IMR-90 (cell line): ENCODE measurements at regions of chr5 and their contacts with region 1.

Region 1: DNA sequence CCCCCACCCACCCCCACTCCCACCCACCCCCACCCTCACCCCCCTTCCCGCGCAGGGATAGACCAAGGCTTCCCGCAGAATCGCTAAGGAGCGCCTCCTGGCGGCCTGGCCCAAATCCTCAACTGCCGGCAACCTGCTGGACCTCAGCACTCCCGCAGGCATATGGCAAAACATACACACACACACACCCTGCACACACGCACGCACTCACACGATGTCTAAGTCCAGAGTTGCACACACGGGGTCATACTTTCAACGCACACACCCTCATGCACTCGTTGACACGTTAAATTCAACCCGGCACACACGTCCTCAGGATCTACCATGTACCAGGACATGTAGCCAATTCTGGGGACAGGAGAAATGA is 1.7 kb downstream of the CPLX2 start:
- DNase-seq: no peak
- ATAC-seq: no peak
- H3K4me3 ChIP-seq: no peak overlapping the region
- H3K27ac ChIP-seq: no peak overlapping the region
- H3K4me1 ChIP-seq: peaks cover 2% of the 10 kb centered on the region; the same call in 1 of the 2 replicates
- H3K27me3 ChIP-seq: peaks cover 19% of the 10 kb centered on the region; the same call in 1 of the 2 replicates
- CTCF ChIP-seq: 0 out of 2 replicates have a peak, but pooled peaks have one; percentile 4
- POLR2A ChIP-seq: no peak
- RAD21 ChIP-seq: no peak

Region 2: DNA sequence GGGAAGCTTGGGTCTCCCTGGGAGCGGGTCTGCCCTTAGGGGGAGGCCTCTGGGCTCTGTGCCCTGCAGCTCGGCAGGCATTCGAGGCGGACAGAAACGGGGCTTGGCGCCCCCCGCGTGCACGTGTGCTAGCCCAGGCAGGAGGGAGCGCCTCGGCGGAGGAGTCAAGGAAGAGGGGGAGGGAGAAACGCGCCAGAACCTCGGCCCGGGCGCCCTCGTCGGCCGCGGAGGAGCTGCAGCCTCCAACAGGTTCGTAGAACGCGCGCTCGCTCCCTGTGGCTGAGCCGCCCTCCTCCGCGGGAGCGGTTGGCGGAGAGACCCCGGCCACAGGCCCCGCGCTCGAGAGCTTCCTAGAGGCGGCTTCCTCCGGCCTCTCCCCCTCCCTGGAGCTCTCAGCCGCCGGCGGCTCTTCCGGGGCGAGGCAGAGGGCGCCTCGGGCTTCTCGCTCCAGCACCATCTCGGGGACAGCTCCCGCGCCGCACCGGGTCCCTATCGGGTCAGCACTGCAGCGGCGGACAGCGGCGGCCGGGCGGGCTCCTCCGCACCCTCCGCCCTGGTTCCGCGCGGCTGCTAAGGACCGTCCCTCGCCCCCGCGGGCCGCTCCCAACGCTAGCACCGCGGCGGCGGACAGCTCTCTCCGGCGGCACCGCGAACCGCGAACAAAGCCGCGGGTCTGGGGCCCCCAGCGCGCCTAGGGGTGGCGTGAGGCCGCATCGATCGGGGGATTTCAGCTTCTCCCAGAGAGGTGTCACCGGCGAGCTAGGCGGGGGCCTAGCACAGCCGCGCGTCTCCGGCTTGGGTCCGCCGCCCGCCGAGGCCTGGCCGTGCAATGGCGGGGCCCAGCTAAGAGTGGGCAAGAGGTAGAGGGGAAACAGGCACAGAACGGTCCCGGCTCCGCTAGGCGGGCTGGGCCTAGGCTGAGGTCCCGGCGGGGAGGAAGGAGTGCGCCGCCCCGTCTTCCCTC is 76.3 kb before region 1 on chr5:
- CTCF ChIA-PET with region 1: no interaction called
- POLR2A ChIA-PET with region 1: no interaction called
- dilution Hi-C with region 1: no loop called
- in situ Hi-C with region 1: no loop called
- intact Hi-C with region 1: loop called (anchors 1 kb)
- DNase-seq: peak; percentile 74
- ATAC-seq: peak; percentile 100
- H3K4me3 ChIP-seq: no peak overlapping the region
- H3K27ac ChIP-seq: no peak overlapping the region
- H3K4me1 ChIP-seq: peaks cover 1% of the 10 kb centered on the region; the same call in 1 of the 2 replicates
- H3K27me3 ChIP-seq: peaks cover 6% of the 10 kb centered on the region; the same call in 1 of the 2 replicates
- CTCF ChIP-seq: no peak
- POLR2A ChIP-seq: no peak
- RAD21 ChIP-seq: no peak

Region 3: DNA sequence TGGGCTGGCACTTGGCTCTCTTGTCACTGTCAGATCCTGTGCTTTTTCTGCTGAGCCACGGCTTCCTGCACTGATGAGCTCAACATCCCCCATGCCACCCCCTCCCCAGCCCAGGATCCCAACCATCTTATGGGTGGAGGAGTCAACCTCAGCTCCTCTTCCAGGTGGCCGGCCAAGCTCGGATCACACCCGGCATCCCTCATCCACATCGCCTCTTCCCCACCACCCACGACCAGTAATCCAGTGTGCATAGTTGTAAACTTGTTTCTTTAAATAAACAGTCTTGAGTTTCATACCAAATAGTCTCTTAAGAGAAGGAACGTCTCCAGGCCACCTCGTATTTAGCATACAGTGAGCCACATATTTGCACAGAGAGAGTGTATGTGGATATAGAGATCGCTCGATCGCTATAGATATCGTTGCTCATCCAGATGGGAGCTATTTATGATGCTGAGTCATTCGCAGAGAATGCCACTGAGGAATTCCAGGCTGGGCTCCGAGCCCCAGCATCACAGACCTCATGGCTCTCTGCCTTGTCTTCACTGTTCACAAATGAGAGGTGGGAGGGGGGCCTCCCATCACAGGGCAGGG is 63.4 kb before region 1 on chr5:
- CTCF ChIA-PET with region 1: no interaction called
- POLR2A ChIA-PET with region 1: no interaction called
- dilution Hi-C with region 1: no loop called
- in situ Hi-C with region 1: no loop called
- intact Hi-C with region 1: loop called (anchors 5 kb)
- DNase-seq: peak; percentile 86
- ATAC-seq: peak; percentile 92
- H3K4me3 ChIP-seq: no peak overlapping the region
- H3K27ac ChIP-seq: no peak overlapping the region
- H3K4me1 ChIP-seq: peaks cover 8% of the 10 kb centered on the region; the same call in 1 of the 2 replicates
- H3K27me3 ChIP-seq: peaks cover 9% of the 10 kb centered on the region
- CTCF ChIP-seq: no peak
- POLR2A ChIP-seq: no peak
- RAD21 ChIP-seq: no peak

Region 4: DNA sequence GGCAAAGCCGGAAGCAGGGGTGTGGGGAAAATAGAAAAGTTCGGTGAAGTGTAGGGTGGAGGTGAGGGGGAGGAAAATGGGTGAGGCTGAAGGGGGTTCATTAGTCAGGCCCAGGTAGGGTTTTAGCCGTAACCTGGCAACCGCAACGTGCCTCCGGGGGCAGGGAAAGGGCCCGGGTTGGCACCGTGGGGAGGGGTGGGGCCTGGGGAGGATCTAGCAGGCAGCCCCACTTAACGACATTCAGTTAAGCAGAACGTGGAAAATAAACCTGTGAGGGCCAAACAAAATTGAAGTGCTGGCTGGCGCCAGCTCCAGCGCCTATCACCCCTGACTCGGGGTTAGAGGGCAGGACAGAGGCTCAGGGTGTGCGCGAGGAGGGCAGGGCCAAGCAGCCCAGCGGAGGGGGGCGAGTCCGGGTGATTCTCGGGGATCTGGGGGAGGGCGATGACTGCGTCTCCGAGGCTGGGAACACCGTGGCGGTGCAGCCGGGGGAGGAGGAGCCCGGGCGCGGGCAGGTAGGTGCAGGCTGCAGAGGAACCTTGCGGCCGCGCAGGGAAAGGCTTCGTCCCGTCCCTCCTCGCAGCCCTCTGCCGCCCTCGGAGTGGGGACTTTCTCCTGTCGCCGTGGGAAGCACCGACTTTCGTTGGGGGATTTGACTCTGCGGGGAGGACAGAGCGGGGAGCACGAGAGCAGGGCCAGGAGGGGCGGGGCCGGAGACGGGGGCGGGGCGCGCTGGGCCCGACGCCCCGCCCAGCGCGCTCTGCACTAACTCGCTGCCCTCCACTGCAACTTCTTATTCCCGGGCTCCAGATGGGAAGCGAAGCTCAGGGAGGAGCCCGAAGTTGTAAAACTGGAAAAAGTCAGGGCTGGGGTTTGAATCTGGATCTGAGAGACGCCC is 1489.8 kb after region 1 on chr5:
- CTCF ChIA-PET with region 1: no interaction called
- POLR2A ChIA-PET with region 1: no interaction called
- dilution Hi-C with region 1: no loop called
- in situ Hi-C with region 1: no loop called
- intact Hi-C with region 1: no loop called
- DNase-seq: no peak
- ATAC-seq: peak; percentile 63
- H3K4me3 ChIP-seq: peak overlapping the region; percentile 54
- H3K27ac ChIP-seq: no peak overlapping the region
- H3K4me1 ChIP-seq: peaks cover 9% of the 10 kb centered on the region; the same call in 1 of the 2 replicates
- H3K27me3 ChIP-seq: peaks cover 19% of the 10 kb centered on the region
- CTCF ChIP-seq: no peak
- POLR2A ChIP-seq: no peak
- RAD21 ChIP-seq: no peak